H1 (cell line): ENCODE measurements at regions of chr7 and their contacts with region 1.

Region 1: GRCh38 chr7:30740424-30741181 is 11.3 kb upstream of the INMT start:
- DNase-seq: peak in 1 of 2 experiments; percentile 97
- H3K4me3 ChIP-seq: no peak overlapping the region
- H3K27ac ChIP-seq: no peak overlapping the region
- H3K4me1 ChIP-seq: no peaks in the 10 kb centered on the region; a peak in 1 of 7 replicates
- H3K27me3 ChIP-seq: no peaks in the 10 kb centered on the region
- CTCF ChIP-seq: peak; percentile 96 to 99 (median 99)
- EP300 ChIP-seq: no peak; a peak in 1 of 3 replicates
- POLR2A ChIP-seq: no peak
- RAD21 ChIP-seq: peak; percentile 99

Region 2: GRCh38 chr7:30625283-30625682 is 115.3 kb before region 1 on chr7:
- CTCF ChIA-PET with region 1: interaction called, 17 read pairs
- POLR2A ChIA-PET with region 1: interaction called, 7 read pairs
- DNase-seq: no peak
- H3K4me3 ChIP-seq: no peak overlapping the region
- H3K27ac ChIP-seq: no peak overlapping the region
- H3K4me1 ChIP-seq: no peaks in the 10 kb centered on the region
- H3K27me3 ChIP-seq: no peaks in the 10 kb centered on the region
- CTCF ChIP-seq: no peak; a peak in 1 of 4 replicates
- EP300 ChIP-seq: no peak
- POLR2A ChIP-seq: no peak
- RAD21 ChIP-seq: peak; percentile 36 to 50

Region 3: DNA sequence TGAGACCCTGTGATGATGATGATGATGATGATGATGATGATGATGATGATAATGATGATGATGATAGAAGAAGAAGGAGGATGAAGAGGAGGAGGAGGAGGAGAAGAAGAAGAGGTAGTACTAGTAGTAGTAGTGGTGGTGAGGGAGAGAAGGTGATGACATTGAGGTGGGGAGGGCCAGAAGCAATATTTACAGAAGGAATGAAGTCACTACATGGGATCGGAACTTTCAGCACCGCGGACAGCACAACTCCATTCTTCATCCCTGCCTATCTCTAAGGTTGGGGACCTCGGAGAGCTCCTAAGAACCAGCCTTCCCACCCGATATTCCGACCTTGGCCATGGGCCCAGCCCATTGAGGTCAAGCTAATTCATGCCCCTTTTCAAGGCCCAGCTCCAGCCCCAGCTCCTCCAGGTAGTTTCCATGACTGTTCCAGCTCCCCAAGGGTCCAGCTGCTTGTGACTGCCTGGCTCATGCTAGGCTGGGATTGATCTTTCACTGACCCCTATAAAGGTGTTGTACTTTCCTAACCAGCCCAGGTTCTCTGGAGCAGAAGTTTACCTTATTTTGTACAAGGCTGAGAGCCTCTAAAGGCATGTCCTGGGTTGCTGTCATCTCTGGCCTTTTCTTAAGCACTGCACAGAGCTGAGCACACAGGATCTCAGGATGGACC is 68.7 kb before region 1 on chr7:
- CTCF ChIA-PET with region 1: interaction called, 22 read pairs
- POLR2A ChIA-PET with region 1: no interaction called
- DNase-seq: peak; percentile 25 to 81
- H3K4me3 ChIP-seq: no peak overlapping the region
- H3K27ac ChIP-seq: no peak overlapping the region
- H3K4me1 ChIP-seq: peaks cover 0 to 2% (median under 1%) of the 10 kb centered on the region in 4 experiments; a peak in 2 of 7 replicates
- H3K27me3 ChIP-seq: peaks cover 0 to 5% (median 0%) of the 10 kb centered on the region in 4 experiments; a peak in 2 of 7 replicates
- CTCF ChIP-seq: no peak
- EP300 ChIP-seq: no peak
- POLR2A ChIP-seq: no peak
- RAD21 ChIP-seq: no peak; a peak in 1 of 4 replicates

Region 4: GRCh38 chr7:30702200-30702599 is 38.4 kb before region 1 on chr7:
- CTCF ChIA-PET with region 1: interaction called, 162 read pairs
- POLR2A ChIA-PET with region 1: no interaction called
- DNase-seq: no peak
- H3K4me3 ChIP-seq: no peak overlapping the region
- H3K27ac ChIP-seq: no peak overlapping the region
- H3K4me1 ChIP-seq: peaks cover 0 to 13% (median 8%) of the 10 kb centered on the region in 4 experiments; a peak in 6 of 7 replicates
- H3K27me3 ChIP-seq: no peaks in the 10 kb centered on the region; a peak in 1 of 7 replicates
- CTCF ChIP-seq: peak; percentile 37 to 54 (median 44)
- EP300 ChIP-seq: no peak
- POLR2A ChIP-seq: no peak
- RAD21 ChIP-seq: peak; percentile 55 to 65

Region 5: DNA sequence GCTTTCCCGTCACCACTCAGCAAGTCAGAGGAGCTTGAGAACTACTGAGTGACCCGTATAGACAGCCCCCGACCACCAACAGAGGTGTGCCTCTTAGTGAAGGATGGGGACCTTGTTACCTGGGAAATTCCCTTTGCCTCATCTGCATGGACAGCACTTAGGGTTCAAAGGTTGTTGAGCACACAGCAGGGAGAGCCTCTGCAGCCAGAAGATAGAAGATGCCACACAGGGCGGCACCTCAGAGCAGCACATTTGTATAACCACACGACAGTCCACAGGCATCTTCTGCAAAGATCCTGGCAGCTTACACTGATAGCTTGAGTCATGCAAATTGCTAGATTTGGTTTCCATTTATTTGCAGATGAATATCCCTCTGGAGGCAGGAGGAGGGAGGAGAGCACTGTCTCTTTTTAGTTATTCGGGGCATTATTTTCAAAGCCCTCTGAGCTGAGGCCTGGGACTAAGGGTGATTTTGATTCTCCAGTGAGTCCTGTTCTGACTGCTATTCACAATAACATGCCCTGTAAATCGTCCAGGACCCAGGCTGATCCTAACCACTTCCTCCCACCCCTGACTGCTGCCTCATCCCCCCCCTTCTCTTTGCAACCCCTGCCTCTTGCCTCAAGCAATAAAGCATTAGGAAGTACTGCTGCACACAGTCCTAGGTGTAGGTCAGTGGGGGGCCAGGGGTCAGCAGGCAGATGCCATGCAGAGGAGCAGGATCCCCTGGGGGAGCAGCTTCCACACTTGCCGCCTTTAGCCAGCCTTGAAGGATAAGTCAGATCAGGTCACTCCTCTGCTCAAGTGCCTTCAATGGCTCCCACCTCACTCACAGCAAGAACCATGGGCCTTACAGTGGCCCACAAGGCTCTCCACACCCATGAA is 13.3 kb before region 1 on chr7:
- CTCF ChIA-PET with region 1: interaction called, 56 read pairs
- POLR2A ChIA-PET with region 1: interaction called, 7 read pairs
- DNase-seq: peak in 1 of 2 experiments; percentile 53
- H3K4me3 ChIP-seq: no peak overlapping the region
- H3K27ac ChIP-seq: peak overlapping the region; percentile 61; the same call in 1 of the 2 replicates
- H3K4me1 ChIP-seq: peaks cover 0 to 19% (median 11%) of the 10 kb centered on the region in 4 experiments; a peak in 6 of 7 replicates
- H3K27me3 ChIP-seq: no peaks in the 10 kb centered on the region; a peak in 2 of 7 replicates
- CTCF ChIP-seq: no peak
- EP300 ChIP-seq: no peak
- POLR2A ChIP-seq: no peak
- RAD21 ChIP-seq: no peak

Region 6: GRCh38 chr7:30771174-30771879 is 30.7 kb after region 1 on chr7 and contains the start of gene MINDY4:
- CTCF ChIA-PET with region 1: interaction called, 16 read pairs
- POLR2A ChIA-PET with region 1: no interaction called
- DNase-seq: peak; percentile 36 to 86
- H3K4me3 ChIP-seq: peak within 1 kb of the TSS; percentile 50 to 93 (median 74)
- H3K27ac ChIP-seq: no peak within 1 kb of the TSS
- H3K4me1 ChIP-seq: peaks cover 0 to 2% (median under 1%) of the 10 kb centered on the region in 4 experiments; a peak in 5 of 7 replicates
- H3K27me3 ChIP-seq: no peaks in the 10 kb centered on the region
- CTCF ChIP-seq: no peak
- EP300 ChIP-seq: no peak
- POLR2A ChIP-seq: peak in 1 of 2 experiments; percentile 72; a peak in 2 of 3 replicates
- RAD21 ChIP-seq: no peak
- total RNA-seq, gene MINDY4: 3.6 and 3.8 TPM in 2 replicates